Naive thymus-derived CD4-positive, alpha-beta T cell (primary cell): ENCODE measurements at regions of chr17 and their contacts with region 1.

Region 1: GRCh38 chr17:68777243-68777855 is 176.2 kb upstream of the FAM20A start:
- DNase-seq: peak in 4 of 9 donors; percentile 16 to 42 (median 26)
- ATAC-seq: no peak
- H3K4me3 ChIP-seq: no peak overlapping the region
- H3K4me3 Mint-ChIP-seq: no peak overlapping the region
- H3K27ac ChIP-seq: no peak overlapping the region
- H3K27ac Mint-ChIP-seq: no peak overlapping the region
- H3K4me1 ChIP-seq: no peaks in the 10 kb centered on the region
- H3K4me1 Mint-ChIP-seq: no peaks in the 10 kb centered on the region
- H3K27me3 ChIP-seq: peaks cover 0 to 4% of the 10 kb centered on the region in 2 donors
- H3K27me3 Mint-ChIP-seq: peaks cover 6 to 22% (median 13%) of the 10 kb centered on the region in 5 donors

Region 2: GRCh38 chr17:68733241-68734176 is 43.8 kb before region 1 on chr17:
- CTCF ChIA-PET with region 1: no interaction called
- POLR2A ChIA-PET with region 1: no interaction called
- intact Hi-C with region 1: no loop called
- DNase-seq: no peak
- ATAC-seq: no peak
- H3K4me3 ChIP-seq: no peak overlapping the region
- H3K4me3 Mint-ChIP-seq: no peak overlapping the region
- H3K27ac ChIP-seq: no peak overlapping the region
- H3K27ac Mint-ChIP-seq: no peak overlapping the region
- H3K4me1 ChIP-seq: no peaks in the 10 kb centered on the region
- H3K4me1 Mint-ChIP-seq: no peaks in the 10 kb centered on the region
- H3K27me3 ChIP-seq: peaks cover 0 to 3% of the 10 kb centered on the region in 2 donors
- H3K27me3 Mint-ChIP-seq: peaks cover 13 to 22% (median 16%) of the 10 kb centered on the region in 5 donors

Region 3: DNA sequence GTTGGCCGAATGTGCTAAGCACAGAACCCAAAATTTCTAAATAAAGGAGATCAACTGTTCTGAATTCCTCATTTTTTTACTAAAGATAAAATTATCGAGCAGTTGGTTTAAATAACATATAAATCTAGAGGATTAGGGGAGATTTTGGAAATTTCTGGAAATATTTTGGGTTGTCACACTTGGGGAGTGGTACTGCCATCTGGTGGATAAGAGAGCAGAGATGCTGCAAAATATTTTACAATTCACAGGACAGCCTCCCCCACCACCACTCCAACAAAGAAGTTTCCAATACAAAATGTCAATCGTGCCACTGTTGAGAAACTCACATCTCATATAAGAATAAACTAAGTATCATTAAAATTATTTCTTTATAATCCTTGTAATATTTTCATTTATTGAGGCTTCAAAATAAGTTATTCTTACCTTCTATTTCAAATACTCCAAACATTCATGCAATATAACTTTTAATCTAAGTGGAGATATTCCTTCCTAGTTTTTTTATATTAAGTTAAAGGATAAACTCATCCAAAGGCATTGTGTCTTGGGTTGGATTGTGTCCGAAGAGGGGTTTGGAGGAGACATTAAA is 194.9 kb after region 1 on chr17:
- CTCF ChIA-PET with region 1: no interaction called
- POLR2A ChIA-PET with region 1: no interaction called
- intact Hi-C with region 1: loop called in 1 of 2 experiments (anchors 5 kb)
- DNase-seq: no peak
- ATAC-seq: no peak
- H3K4me3 ChIP-seq: no peak overlapping the region
- H3K4me3 Mint-ChIP-seq: no peak overlapping the region
- H3K27ac ChIP-seq: no peak overlapping the region
- H3K27ac Mint-ChIP-seq: no peak overlapping the region
- H3K4me1 ChIP-seq: no peaks in the 10 kb centered on the region
- H3K4me1 Mint-ChIP-seq: peaks cover 0 to 2% (median 0%) of the 10 kb centered on the region in 7 donors
- H3K27me3 ChIP-seq: peaks cover 0 to 3% of the 10 kb centered on the region in 2 donors
- H3K27me3 Mint-ChIP-seq: peaks cover 0 to 21% (median 13%) of the 10 kb centered on the region in 5 donors

Region 4: DNA sequence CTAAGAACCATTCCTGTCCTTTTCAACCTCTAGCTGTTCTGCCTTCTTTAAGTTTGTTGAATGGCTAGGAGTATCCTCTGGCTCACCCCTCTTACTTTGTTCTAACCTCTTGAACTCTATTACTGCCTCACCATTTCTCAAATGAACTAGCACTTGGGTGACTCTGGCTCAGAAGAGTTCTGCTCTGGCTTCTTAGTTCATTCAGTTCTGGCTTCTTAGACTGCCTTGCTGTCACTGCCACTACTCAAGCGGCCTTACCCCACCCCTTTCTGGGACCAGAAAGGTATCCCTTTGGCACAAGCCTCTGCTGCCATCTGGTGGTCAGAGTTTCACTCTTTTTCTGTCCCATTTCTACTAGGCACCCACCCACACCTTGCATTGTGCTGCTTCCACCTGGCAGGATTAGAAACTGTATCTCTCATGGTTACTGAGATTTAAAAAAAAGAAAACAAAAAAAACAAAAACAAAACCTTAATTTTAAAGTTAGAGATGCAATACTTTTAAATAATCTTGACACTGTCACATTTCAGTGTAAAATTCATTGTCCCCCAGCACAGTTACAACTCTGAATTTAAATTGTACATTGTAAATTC is 458.1 kb after region 1 on chr17:
- CTCF ChIA-PET with region 1: interaction called, 3 read pairs
- POLR2A ChIA-PET with region 1: no interaction called
- intact Hi-C with region 1: loop called in 1 of 2 experiments (anchors 1 kb)
- DNase-seq: peak in 8 of 9 donors; percentile 18 to 64 (median 36)
- ATAC-seq: peak; percentile 79
- H3K4me3 ChIP-seq: no peak overlapping the region
- H3K4me3 Mint-ChIP-seq: no peak overlapping the region
- H3K27ac ChIP-seq: no peak overlapping the region
- H3K27ac Mint-ChIP-seq: no peak overlapping the region
- H3K4me1 ChIP-seq: no peaks in the 10 kb centered on the region
- H3K4me1 Mint-ChIP-seq: peaks cover 0 to 3% (median 0%) of the 10 kb centered on the region in 7 donors
- H3K27me3 ChIP-seq: no peaks in the 10 kb centered on the region
- H3K27me3 Mint-ChIP-seq: peaks cover 0 to 8% (median 0%) of the 10 kb centered on the region in 5 donors